ENCODE measurements at regions of chr7 and their contacts with region 1.

Region 1: DNA sequence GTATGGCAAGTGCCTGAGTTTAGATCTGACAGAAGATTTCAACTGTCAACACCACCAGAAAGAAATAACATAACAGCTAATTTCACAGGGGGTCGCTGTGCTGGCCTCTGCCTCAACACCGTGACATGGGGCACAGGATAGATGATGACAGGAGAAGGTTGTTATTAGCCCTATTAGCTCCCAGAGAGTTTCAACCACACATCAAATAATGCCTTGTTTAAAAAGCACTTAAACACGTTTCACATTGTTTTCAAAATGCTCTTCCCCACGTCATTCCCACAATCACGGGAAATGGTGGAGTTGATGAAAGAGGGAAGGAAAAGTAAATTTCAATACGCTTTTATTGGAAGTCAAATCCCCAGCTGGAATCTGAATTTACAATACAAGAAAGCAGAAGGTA is 184.7 kb downstream of the MAGI2 start:
- H3K4me3 ChIP-seq: no peak overlapping the region
- H3K27ac ChIP-seq: no peak overlapping the region
- H3K4me1 ChIP-seq: no peaks in the 10 kb centered on the region
- CTCF ChIP-seq: no peak

Region 2: DNA sequence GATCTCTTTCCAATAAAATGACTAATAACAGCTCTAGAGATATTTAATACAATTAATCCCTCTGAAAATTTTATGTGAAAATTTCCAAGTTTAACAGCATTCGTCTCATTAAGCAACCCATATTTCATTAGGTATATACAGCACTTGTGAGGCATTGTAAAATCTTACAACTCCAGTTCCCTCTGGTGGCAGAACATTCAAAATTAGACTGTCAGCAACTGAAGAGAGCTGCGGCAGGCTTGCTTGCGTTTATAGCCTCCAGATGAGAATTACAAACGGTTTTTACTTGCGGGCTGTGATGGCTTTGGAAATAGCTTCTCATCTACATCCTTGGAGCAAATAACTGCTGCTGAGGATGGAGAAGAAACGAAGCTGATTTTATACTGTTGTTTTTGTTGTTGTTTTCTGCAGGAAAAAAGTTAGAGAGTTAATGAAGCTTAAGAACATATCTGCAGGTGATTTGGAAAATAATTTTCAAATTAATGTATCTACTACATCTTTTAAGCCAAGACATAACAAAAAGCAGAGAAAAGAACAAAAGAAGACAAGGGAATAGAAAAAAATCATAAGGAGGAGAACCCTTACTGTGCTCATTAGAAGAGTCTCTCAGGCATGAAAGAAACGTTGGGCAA is 13.4 kb after region 1 on chr7:
- CTCF ChIA-PET with region 1: interaction called, 11 read pairs
- POLR2A ChIA-PET with region 1: no interaction called
- H3K4me3 ChIP-seq: no peak overlapping the region
- H3K27ac ChIP-seq: no peak overlapping the region
- H3K4me1 ChIP-seq: peaks cover 4% of the 10 kb centered on the region; the same call in 1 of the 2 replicates
- CTCF ChIP-seq: no peak

Region 3: DNA sequence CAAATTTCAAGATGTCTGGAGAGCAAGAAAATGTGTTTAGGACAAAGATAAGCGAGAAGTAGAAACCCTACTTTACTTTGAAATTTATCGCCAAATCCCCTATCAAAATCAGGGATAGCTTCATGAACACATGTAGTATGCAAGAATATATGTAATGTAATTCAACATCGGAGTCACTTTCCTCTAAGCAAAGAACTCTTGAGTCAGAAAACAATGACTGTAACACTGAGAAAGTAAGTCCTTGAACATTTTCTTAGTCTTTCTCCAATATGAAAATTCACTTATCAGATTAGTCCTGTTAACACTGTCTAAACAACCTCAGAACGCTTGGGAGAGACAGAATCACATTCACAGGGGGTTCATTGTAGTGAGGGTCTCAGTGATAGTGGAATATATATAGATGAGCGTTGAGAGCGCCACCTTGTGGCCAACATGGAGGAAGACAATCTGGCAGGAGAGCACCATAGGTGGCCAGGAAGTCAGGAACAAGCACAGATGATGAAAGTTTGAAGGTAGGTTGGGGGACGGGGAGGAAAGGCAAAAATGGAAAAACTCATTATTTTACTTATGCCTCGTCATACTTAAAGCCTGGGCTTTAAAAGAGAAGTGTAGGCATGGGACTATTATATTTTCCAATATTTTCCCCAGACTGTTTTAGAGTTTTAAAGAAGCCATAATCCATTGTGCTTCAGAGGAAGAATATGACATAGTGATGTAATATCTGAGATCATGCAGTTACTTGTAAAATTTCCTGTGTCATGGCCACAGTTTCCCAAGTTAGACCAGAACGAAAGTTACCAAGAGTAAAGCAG is 750.4 kb after region 1 on chr7:
- CTCF ChIA-PET with region 1: no interaction called
- POLR2A ChIA-PET with region 1: no interaction called
- H3K4me3 ChIP-seq: no peak overlapping the region
- H3K27ac ChIP-seq: no peak overlapping the region
- H3K4me1 ChIP-seq: no peaks in the 10 kb centered on the region
- CTCF ChIP-seq: peak; percentile 40; the same call in 1 of the 2 replicates